IMR-90 (cell line): ENCODE measurements at regions of chr9 and their contacts with region 1.

Region 1: GRCh38 chr9:89179895-89180667 is 1.5 kb upstream of the SHC3 start:
- DNase-seq: peak; percentile 97
- ATAC-seq: peak; percentile 66
- H3K4me3 ChIP-seq: peak overlapping the region; percentile 50
- H3K27ac ChIP-seq: peak overlapping the region; percentile 91
- H3K4me1 ChIP-seq: peaks cover 11% of the 10 kb centered on the region
- H3K27me3 ChIP-seq: no peaks in the 10 kb centered on the region
- CTCF ChIP-seq: no peak
- POLR2A ChIP-seq: peak; percentile 76
- RAD21 ChIP-seq: peak; percentile 3; the same call in 1 of the 2 replicates

Region 2: GRCh38 chr9:88593537-88594185 is 586.4 kb before region 1 on chr9:
- CTCF ChIA-PET with region 1: no interaction called
- POLR2A ChIA-PET with region 1: no interaction called
- dilution Hi-C with region 1: no loop called
- in situ Hi-C with region 1: no loop called
- intact Hi-C with region 1: loop called (anchors 5 kb)
- DNase-seq: peak; percentile 74
- ATAC-seq: peak; percentile 90
- H3K4me3 ChIP-seq: no peak overlapping the region
- H3K27ac ChIP-seq: no peak overlapping the region
- H3K4me1 ChIP-seq: no peaks in the 10 kb centered on the region
- H3K27me3 ChIP-seq: no peaks in the 10 kb centered on the region
- CTCF ChIP-seq: peak; percentile 83
- POLR2A ChIP-seq: no peak
- RAD21 ChIP-seq: peak; percentile 87

Region 3: DNA sequence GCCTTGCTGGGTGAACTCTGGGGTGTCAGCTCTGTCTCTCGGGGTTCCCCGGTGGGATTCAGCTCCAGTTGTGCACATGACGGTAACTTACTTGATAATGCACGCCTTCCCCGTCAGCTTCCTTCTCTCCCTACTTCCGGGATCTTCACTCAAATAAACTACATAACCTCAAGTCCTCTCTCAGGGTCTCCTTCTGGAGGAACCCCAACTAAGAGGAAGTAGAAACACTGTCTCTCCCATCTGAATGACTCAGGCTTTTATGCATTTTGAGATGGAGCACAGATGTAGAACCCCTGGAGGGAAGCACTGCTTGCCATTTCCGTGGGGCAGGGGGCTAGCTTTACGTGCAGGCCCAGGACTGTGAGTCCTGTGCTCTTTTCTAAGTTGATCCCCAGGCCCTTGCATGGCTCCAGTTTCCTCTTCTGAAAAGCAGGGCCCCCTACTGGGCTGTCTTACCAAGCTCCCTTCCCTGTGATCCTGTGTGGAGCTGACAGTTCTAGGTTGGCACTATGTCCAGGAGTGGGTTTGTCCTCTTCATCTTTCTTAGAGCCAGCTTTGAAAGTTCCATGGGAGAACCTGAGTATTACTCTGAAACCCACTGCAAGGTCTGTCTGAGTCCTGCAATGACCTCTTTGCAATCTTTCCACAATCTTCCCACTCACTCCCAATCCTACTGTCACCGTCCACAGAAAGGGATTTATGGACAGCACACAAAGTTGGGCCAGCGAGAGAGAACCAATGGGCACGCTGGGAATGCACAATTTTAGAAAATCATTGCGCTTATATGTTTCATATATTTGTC is 171.1 kb before region 1 on chr9:
- CTCF ChIA-PET with region 1: no interaction called
- POLR2A ChIA-PET with region 1: no interaction called
- dilution Hi-C with region 1: no loop called
- in situ Hi-C with region 1: no loop called
- intact Hi-C with region 1: loop called (anchors 5 kb)
- DNase-seq: no peak
- ATAC-seq: peak; percentile 56
- H3K4me3 ChIP-seq: no peak overlapping the region
- H3K27ac ChIP-seq: no peak overlapping the region
- H3K4me1 ChIP-seq: no peaks in the 10 kb centered on the region
- H3K27me3 ChIP-seq: no peaks in the 10 kb centered on the region
- CTCF ChIP-seq: no peak
- POLR2A ChIP-seq: no peak
- RAD21 ChIP-seq: no peak

Region 4: DNA sequence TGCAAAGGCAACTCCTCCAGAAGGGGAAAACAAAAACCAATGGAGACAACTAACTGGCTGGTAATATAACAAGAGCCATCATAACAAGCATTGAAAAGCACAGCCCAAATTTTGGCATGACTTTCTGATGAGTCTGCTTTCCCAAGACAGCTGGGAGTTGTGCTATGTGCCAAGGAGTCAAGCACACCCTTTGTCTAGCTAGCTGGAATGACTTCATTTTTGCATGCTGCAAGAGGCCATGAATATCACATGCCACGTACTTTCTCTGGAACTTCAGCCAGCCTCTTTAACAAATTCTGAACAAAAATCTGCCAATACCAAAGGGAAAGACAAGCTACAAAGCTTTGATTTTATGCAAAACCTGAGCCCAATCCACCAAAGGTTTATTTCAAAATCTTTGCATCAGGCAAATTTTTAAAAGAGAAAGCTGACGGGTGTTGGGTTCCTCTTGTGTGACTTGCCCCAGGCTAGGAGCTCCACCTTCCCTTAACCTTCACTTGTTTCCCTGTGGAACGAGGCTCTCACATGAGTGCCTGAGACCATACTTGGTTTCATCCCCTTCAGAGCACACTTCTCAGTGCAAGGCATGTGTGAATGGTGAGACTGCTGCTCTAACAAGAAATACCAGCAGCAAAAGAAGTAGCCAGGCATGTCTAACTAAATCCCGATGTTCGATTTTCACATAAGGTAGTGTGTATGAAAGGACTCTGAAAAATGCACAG is 141.5 kb before region 1 on chr9:
- CTCF ChIA-PET with region 1: no interaction called
- POLR2A ChIA-PET with region 1: no interaction called
- dilution Hi-C with region 1: no loop called
- in situ Hi-C with region 1: no loop called
- intact Hi-C with region 1: loop called (anchors 5 kb)
- DNase-seq: peak; percentile 97
- ATAC-seq: peak; percentile 91
- H3K4me3 ChIP-seq: no peak overlapping the region
- H3K27ac ChIP-seq: peak overlapping the region; percentile 70; the same call in 1 of the 2 replicates
- H3K4me1 ChIP-seq: peaks cover 14% of the 10 kb centered on the region
- H3K27me3 ChIP-seq: no peaks in the 10 kb centered on the region
- CTCF ChIP-seq: no peak
- POLR2A ChIP-seq: no peak
- RAD21 ChIP-seq: no peak

Region 5: GRCh38 chr9:89096807-89097206 is 83.3 kb before region 1 on chr9:
- CTCF ChIA-PET with region 1: no interaction called
- POLR2A ChIA-PET with region 1: no interaction called
- dilution Hi-C with region 1: no loop called
- in situ Hi-C with region 1: no loop called
- intact Hi-C with region 1: no loop called
- DNase-seq: no peak
- ATAC-seq: no peak
- H3K4me3 ChIP-seq: no peak overlapping the region
- H3K27ac ChIP-seq: no peak overlapping the region
- H3K4me1 ChIP-seq: peaks cover 9% of the 10 kb centered on the region
- H3K27me3 ChIP-seq: no peaks in the 10 kb centered on the region
- CTCF ChIP-seq: no peak
- POLR2A ChIP-seq: no peak
- RAD21 ChIP-seq: no peak

Region 6: DNA sequence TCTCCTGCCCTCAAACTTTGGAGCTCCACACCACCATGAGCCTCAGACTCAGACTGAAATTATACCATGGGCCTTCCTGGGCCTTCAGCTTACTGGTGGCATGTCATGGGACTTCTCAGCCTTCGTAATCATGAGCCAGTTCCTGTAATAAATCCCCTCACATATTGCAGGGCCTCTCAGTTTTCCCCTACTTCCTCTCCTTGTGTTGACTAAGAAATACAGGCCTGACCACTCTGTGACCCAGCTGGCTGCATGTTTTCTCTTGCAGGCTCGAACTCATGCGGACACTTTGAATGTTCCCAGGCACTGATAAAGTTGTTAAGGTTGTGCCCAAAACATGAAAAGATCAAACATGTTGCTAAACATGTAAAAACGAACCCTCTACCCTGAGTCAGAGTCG is 24.7 kb after region 1 on chr9:
- CTCF ChIA-PET with region 1: no interaction called
- POLR2A ChIA-PET with region 1: no interaction called
- dilution Hi-C with region 1: no loop called
- in situ Hi-C with region 1: no loop called
- intact Hi-C with region 1: no loop called
- DNase-seq: no peak
- ATAC-seq: no peak
- H3K4me3 ChIP-seq: no peak overlapping the region
- H3K27ac ChIP-seq: no peak overlapping the region
- H3K4me1 ChIP-seq: no peaks in the 10 kb centered on the region
- H3K27me3 ChIP-seq: peaks cover 9% of the 10 kb centered on the region; the same call in 1 of the 2 replicates
- CTCF ChIP-seq: no peak
- POLR2A ChIP-seq: no peak
- RAD21 ChIP-seq: no peak

Region 7: GRCh38 chr9:89218040-89218928 is 38.2 kb after region 1 on chr9:
- CTCF ChIA-PET with region 1: no interaction called
- POLR2A ChIA-PET with region 1: no interaction called
- dilution Hi-C with region 1: no loop called
- in situ Hi-C with region 1: no loop called
- intact Hi-C with region 1: loop called (anchors 5 kb)
- DNase-seq: no peak
- ATAC-seq: peak; percentile 59
- H3K4me3 ChIP-seq: no peak overlapping the region
- H3K27ac ChIP-seq: peak overlapping the region; percentile 74; the same call in 1 of the 2 replicates
- H3K4me1 ChIP-seq: peaks cover 5% of the 10 kb centered on the region; the same call in 1 of the 2 replicates
- H3K27me3 ChIP-seq: peaks cover 2% of the 10 kb centered on the region
- CTCF ChIP-seq: no peak
- POLR2A ChIP-seq: no peak
- RAD21 ChIP-seq: no peak

Region 8: GRCh38 chr9:89310475-89311346 is 130.6 kb after region 1 on chr9 and contains the start of gene CKS2:
- CTCF ChIA-PET with region 1: no interaction called
- POLR2A ChIA-PET with region 1: interaction called, 3 read pairs
- dilution Hi-C with region 1: no loop called
- in situ Hi-C with region 1: no loop called
- intact Hi-C with region 1: loop called (anchors 1 kb)
- DNase-seq: peak; percentile 100
- ATAC-seq: peak; percentile 89
- H3K4me3 ChIP-seq: peak within 1 kb of the TSS; percentile 67
- H3K27ac ChIP-seq: peak within 1 kb of the TSS; percentile 95
- H3K4me1 ChIP-seq: peaks cover 3% of the 10 kb centered on the region
- H3K27me3 ChIP-seq: no peaks in the 10 kb centered on the region
- CTCF ChIP-seq: no peak
- POLR2A ChIP-seq: peak; percentile 99
- RAD21 ChIP-seq: no peak
- total RNA-seq, gene CKS2: 192 and 322 TPM in 2 replicates